ENCODE measurements at regions of chr1 and their contacts with region 1.

Region 1: DNA sequence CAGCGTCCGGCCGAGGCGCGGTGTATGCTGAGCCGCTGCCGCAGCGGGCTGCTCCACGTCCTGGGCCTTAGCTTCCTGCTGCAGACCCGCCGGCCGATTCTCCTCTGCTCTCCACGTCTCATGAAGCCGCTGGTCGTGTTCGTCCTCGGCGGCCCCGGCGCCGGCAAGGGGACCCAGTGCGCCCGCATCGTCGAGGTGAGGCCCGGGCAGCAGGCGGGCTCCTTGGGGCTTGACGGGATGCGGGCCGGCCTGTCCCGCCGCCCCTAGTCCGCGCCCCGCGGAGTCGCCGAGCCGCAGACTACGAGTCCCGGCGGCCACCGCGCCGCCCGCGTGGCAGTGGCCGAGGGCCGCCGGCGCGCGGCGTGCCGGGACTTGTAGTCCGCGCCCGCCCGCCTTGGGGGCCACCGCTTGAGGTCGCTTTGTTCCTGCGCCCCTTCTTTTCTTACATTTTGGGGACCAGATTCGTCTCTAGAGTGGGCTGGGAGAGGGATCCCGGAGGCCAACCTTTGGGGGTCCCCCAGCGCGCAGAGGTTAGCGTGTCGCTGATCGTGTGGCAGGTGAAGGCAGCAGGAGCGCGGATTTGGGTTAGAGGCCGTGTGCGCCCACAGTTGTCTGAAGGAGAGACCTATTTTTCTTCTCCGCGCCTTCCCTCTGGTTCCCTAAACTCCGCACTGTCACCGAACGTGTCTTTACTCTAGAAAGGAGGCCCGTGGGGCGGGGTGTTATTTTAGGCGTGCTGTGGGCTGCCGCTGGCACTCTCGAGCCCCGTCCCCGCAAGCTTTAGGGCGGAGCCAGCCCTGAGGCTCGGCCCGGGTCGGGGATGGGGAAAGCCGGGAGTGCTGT is 553 bp downstream of the CMPK1 start:
- DNase-seq: no peak
- H3K4me3 ChIP-seq: peak overlapping the region; percentile 92
- CTCF ChIP-seq: peak; percentile 29

Region 2: GRCh38 chr1:47179017-47179987 is 154.8 kb before region 1 on chr1:
- CTCF ChIA-PET with region 1: interaction called, 11 read pairs
- POLR2A ChIA-PET with region 1: interaction called, 5 read pairs
- DNase-seq: peak; percentile 72
- H3K4me3 ChIP-seq: peak overlapping the region; percentile 60
- CTCF ChIP-seq: peak; percentile 97

Region 3: DNA sequence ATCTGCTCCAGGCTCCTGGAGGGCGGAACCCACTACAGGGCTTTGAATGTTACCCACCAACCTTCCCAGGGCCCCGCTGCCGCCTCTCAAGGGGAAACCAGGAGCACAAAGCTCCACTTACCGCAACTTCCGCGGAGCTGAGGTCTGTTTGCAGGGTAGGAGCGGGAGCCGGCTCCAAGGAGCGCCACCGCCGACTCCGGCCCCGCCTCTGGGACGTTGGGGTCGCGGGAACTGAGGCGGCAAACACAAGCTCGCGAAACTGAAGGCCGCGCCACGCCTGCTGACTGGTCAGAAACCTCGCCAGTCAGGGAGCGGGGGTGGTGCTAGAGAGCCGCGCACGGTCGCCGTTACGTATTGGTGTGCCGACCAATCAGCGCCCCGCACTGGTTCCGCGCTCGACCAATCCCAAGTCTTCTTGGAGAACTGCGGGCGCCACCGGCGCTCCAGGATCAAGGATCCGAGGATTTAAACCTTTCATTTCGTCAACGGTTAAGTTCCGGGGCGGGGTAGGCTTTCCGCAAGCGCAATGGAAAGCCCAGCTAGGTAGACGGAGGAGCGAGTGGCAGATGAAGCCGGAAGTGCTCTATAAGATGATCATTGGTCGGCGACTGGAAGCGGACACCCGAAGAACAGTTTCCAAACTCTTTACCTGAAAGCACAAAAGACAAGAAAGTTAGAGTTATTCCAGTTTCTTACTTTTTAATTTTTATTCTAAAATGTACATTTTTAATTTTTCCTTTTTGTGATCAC is 20.1 kb before region 1 on chr1 and contains the start of gene STIL:
- CTCF ChIA-PET with region 1: interaction called, 20 read pairs
- POLR2A ChIA-PET with region 1: interaction called, 17 read pairs
- DNase-seq: peak; percentile 97
- H3K4me3 ChIP-seq: peak within 1 kb of the TSS; percentile 91
- CTCF ChIP-seq: no peak

Region 4: GRCh38 chr1:47323599-47324031 is 10.5 kb before region 1 on chr1:
- CTCF ChIA-PET with region 1: interaction called, 20 read pairs
- POLR2A ChIA-PET with region 1: interaction called, 13 read pairs
- DNase-seq: no peak
- H3K4me3 ChIP-seq: no peak overlapping the region
- CTCF ChIP-seq: no peak

Measured in AG04449 (cell line).